ENCODE measurements at regions of chr1 and their contacts with region 1.

Region 1: GRCh38 chr1:82795508-82796149 is 994.9 kb downstream of the ADGRL2 start:
- DNase-seq: peak; percentile 6
- H3K4me3 ChIP-seq: no peak overlapping the region
- H3K27ac ChIP-seq: no peak overlapping the region
- H3K4me1 ChIP-seq: no peaks in the 10 kb centered on the region
- H3K27me3 ChIP-seq: no peaks in the 10 kb centered on the region
- CTCF ChIP-seq: peak; percentile 36

Region 2: GRCh38 chr1:82867781-82868180 is 72.2 kb after region 1 on chr1:
- CTCF ChIA-PET with region 1: no interaction called
- POLR2A ChIA-PET with region 1: no interaction called
- intact Hi-C with region 1: loop called (anchors 5 kb)
- DNase-seq: no peak
- H3K4me3 ChIP-seq: no peak overlapping the region
- H3K27ac ChIP-seq: no peak overlapping the region
- H3K4me1 ChIP-seq: no peaks in the 10 kb centered on the region
- H3K27me3 ChIP-seq: no peaks in the 10 kb centered on the region
- CTCF ChIP-seq: no peak